ENCODE measurements at regions of chr9 and their contacts with region 1.

Region 1: GRCh38 chr9:111759762-111760639 is 34.7 kb downstream of the SHOC1 start:
- DNase-seq: no peak
- ATAC-seq: peak; percentile 72 to 84
- H3K4me3 ChIP-seq: no peak overlapping the region
- H3K27ac ChIP-seq: no peak overlapping the region
- H3K4me1 ChIP-seq: no peaks in the 10 kb centered on the region
- H3K27me3 ChIP-seq: no peaks in the 10 kb centered on the region

Region 2: GRCh38 chr9:111805830-111806241 is 45.8 kb after region 1 on chr9:
- intact Hi-C with region 1: no loop called
- DNase-seq: no peak
- ATAC-seq: no peak
- H3K4me3 ChIP-seq: no peak overlapping the region
- H3K27ac ChIP-seq: no peak overlapping the region
- H3K4me1 ChIP-seq: no peaks in the 10 kb centered on the region
- H3K27me3 ChIP-seq: no peaks in the 10 kb centered on the region

Region 3: DNA sequence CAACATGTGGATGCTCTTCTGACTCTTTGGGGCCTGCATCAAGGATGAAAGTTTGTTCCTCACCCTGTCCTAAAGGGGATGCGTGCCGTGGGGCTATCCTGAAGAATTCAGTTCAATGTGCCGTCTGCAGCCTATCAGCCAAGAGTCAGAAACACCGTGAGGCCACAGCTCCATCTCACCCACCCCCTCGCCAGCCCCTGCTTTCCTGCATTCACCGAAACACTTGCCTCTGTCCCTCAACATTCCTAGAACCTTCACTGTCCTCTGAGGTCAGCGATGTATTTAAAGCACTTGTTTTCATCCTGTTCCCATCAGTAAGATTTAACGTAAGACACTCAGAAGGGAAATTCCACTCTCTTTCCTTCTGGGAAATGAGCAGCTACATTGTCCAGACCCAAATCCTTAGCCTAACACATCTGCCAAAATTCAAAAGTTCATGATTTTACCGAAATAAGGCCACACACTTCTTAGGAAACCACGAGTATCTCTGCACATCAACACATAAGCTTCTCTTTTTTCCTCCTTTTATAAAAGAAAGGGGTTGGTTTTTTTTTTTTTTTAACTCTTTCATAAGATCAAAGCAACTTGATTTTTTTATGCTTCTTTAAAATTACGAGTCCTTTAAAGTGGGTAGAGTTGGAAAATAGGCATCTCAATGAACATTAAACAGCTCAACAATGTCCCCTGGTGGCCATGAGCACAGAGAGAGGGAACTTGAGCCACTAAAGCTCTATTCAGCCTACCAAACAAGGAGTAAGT is 314.4 kb after region 1 on chr9:
- intact Hi-C with region 1: loop called (anchors 2 to 5 kb)
- DNase-seq: peak; percentile 55 to 75 (median 66)
- ATAC-seq: peak; percentile 85 to 86
- H3K4me3 ChIP-seq: peak overlapping the region; percentile 17
- H3K27ac ChIP-seq: peak overlapping the region; percentile 43
- H3K4me1 ChIP-seq: peaks cover 5% of the 10 kb centered on the region
- H3K27me3 ChIP-seq: no peaks in the 10 kb centered on the region

Region 4: DNA sequence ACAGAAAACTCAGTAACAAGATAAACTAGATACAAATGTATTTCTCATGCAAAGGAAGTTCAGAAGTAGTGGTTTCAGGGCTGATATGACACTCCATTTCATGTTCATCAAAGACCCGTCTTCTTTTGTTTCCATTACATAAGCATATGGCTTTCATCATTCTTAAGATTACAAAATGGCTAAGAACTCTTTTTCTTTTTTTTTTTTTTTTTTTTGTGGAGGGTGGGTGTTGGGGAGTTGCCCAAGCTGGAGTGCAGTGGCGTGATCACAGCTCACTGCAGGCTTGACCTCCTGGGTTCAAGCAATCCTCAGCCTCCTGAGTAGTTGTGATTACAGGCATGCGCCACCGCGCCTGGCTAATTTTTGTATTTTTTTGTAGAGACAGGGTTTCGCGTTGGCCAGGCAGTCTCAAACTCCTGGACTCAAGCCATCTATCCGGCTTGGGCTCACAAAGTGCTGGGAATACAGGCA is 595.5 kb after region 1 on chr9:
- intact Hi-C with region 1: loop called in 2 of 4 experiments (anchors 10 kb)
- DNase-seq: peak; percentile 35 to 70 (median 58)
- ATAC-seq: no peak
- H3K4me3 ChIP-seq: no peak overlapping the region
- H3K27ac ChIP-seq: no peak overlapping the region
- H3K4me1 ChIP-seq: no peaks in the 10 kb centered on the region
- H3K27me3 ChIP-seq: no peaks in the 10 kb centered on the region

Region 5: DNA sequence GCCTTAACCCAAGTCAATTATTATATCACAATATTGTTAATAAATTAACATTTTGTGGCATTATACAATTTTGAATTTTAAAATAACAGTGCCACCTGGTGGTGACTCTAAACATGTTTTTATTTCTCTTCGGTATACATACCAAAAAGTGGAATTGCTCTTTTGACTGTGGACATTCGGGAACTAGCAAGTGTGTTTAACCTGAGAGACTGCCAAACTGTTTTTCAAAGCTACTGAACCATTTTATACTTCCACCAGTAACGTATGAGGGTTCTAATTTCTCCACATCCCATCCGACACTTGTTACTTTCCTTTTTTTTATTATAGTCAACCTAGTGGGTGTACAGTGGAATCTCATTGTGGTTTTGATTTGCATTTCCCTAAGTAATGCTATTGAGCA is 601.6 kb after region 1 on chr9:
- intact Hi-C with region 1: loop called in 2 of 4 experiments (anchors 10 kb)
- DNase-seq: no peak
- ATAC-seq: peak in 1 of 2 donors; percentile 43
- H3K4me3 ChIP-seq: no peak overlapping the region
- H3K27ac ChIP-seq: no peak overlapping the region
- H3K4me1 ChIP-seq: no peaks in the 10 kb centered on the region
- H3K27me3 ChIP-seq: no peaks in the 10 kb centered on the region

Measured in right cardiac atrium (tissue), 5 donors.